Activated CD4-positive, alpha-beta T cell treated with anti-CD3 and anti-CD28 coated beads, Interleukin-2, amount 10 ng/mL, durations not matched to agents 24 days and 14 days (primary cell): ENCODE measurements at regions of chr2 and their contacts with region 1.

Region 1: GRCh38 chr2:98438190-98439133 is 6.2 kb upstream of the INPP4A start:
- DNase-seq: peak; percentile 64
- H3K4me3 Mint-ChIP-seq: peak overlapping the region; percentile 58
- H3K27ac Mint-ChIP-seq: peak overlapping the region; percentile 87
- H3K4me1 Mint-ChIP-seq: peaks cover 17% of the 10 kb centered on the region
- H3K27me3 Mint-ChIP-seq: no peaks in the 10 kb centered on the region

Region 2: DNA sequence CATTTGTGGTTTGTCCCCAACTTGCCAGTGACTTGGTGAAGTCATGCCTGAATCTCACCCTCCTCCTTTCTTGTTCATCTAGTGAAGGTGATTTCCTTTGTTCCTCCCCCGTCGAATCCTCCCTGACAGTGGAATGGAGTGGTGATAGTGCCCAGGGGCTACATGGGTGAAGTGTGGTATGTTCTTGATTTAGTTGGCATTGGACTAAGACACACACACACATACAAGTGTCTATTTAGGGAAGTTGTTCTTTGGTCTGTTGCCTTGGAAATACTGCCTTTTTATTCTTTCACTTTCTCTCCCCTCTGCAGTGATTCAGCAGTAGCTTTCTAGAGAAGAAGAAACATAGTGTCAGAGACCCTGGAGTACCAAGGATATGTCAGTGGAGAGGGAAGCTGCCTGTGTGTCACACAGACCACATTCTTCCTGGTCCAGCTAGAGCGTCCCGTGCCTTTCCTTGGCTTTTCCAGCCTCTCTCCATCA is 17.1 kb after region 1 on chr2:
- intact Hi-C with region 1: loop called (anchors 1 kb)
- DNase-seq: peak; percentile 88
- H3K4me3 Mint-ChIP-seq: peak overlapping the region; percentile 76
- H3K27ac Mint-ChIP-seq: peak overlapping the region; percentile 95
- H3K4me1 Mint-ChIP-seq: peaks cover 88% of the 10 kb centered on the region
- H3K27me3 Mint-ChIP-seq: no peaks in the 10 kb centered on the region

Region 3: GRCh38 chr2:98479959-98480524 is 41.6 kb after region 1 on chr2:
- intact Hi-C with region 1: loop called (anchors 2 kb)
- DNase-seq: peak; percentile 79
- H3K4me3 Mint-ChIP-seq: peak overlapping the region; percentile 61
- H3K27ac Mint-ChIP-seq: peak overlapping the region; percentile 88
- H3K4me1 Mint-ChIP-seq: peaks cover 99% of the 10 kb centered on the region
- H3K27me3 Mint-ChIP-seq: no peaks in the 10 kb centered on the region

Region 4: DNA sequence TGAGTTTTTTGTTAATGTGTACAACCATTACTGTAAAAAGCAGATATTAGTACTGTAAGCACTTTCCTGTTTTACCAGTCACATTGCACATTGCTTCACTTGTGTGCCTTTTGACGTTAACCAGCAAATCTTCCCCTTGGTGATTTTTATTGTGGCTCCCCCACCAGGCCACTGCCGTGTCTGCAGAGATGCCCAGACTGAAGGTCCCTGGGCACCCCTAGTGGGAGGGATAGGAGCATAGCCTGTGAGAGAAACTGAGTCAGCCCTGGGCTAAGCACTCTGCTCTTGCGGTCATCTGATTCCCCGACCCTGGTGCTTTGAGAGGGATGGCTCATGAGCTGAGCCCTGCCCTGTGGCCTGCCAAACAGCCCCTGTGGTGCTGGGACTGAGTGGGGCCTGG is 79.6 kb after region 1 on chr2:
- intact Hi-C with region 1: loop called (anchors 2 kb)
- DNase-seq: peak; percentile 83
- H3K4me3 Mint-ChIP-seq: no peak overlapping the region
- H3K27ac Mint-ChIP-seq: no peak overlapping the region
- H3K4me1 Mint-ChIP-seq: peaks cover 41% of the 10 kb centered on the region
- H3K27me3 Mint-ChIP-seq: no peaks in the 10 kb centered on the region